K562 (cell line): ENCODE measurements at regions of chr16 and their contacts with region 1.

Region 1: GRCh38 chr16:4475880-4476788 is at the start of gene HMOX2:
- DNase-seq: peak; percentile 91 to 96 (median 93)
- ATAC-seq: peak; percentile 87
- H3K4me3 ChIP-seq: peak within 1 kb of the TSS; percentile 79
- H3K27ac ChIP-seq: peak within 1 kb of the TSS; percentile 95
- H3K4me1 ChIP-seq: peaks cover 11 to 37% of the 10 kb centered on the region in 2 experiments; a peak in 4 of 5 replicates
- H3K27me3 ChIP-seq: no peaks in the 10 kb centered on the region
- CTCF ChIP-seq: peak; percentile 67 to 74 (median 67)
- EP300 ChIP-seq: peak; percentile 26; the same call in 1 of the 2 replicates
- POLR2A ChIP-seq: peak; percentile 87
- RAD21 ChIP-seq: peak in 1 of 2 experiments; percentile 34; a peak in 2 of 4 replicates
- polyA plus RNA-seq, gene HMOX2: 26.8 to 46.3 TPM

Region 2: GRCh38 chr16:4461250-4462085 is 14.7 kb before region 1 on chr16:
- CTCF ChIA-PET with region 1: no interaction called
- POLR2A ChIA-PET with region 1: interaction called, 59 read pairs
- in situ Hi-C with region 1: no loop called
- intact Hi-C with region 1: no loop called
- DNase-seq: peak; percentile 32 to 64 (median 42)
- ATAC-seq: peak; percentile 82
- H3K4me3 ChIP-seq: no peak overlapping the region
- H3K27ac ChIP-seq: no peak overlapping the region
- H3K4me1 ChIP-seq: peaks cover 0 to 18% of the 10 kb centered on the region in 2 experiments; a peak in 2 of 5 replicates
- H3K27me3 ChIP-seq: no peaks in the 10 kb centered on the region
- CTCF ChIP-seq: no peak
- EP300 ChIP-seq: no peak
- POLR2A ChIP-seq: 0 out of 2 replicates have a peak, but pooled peaks have one; percentile 32
- RAD21 ChIP-seq: no peak

Region 3: GRCh38 chr16:4487955-4488498 is 11.9 kb after region 1 on chr16:
- CTCF ChIA-PET with region 1: no interaction called
- POLR2A ChIA-PET with region 1: interaction called, 18 read pairs
- in situ Hi-C with region 1: no loop called
- intact Hi-C with region 1: no loop called
- DNase-seq: no peak
- ATAC-seq: no peak
- H3K4me3 ChIP-seq: no peak overlapping the region
- H3K27ac ChIP-seq: no peak overlapping the region
- H3K4me1 ChIP-seq: peaks cover 0 to 5% of the 10 kb centered on the region in 2 experiments; a peak in 2 of 5 replicates
- H3K27me3 ChIP-seq: no peaks in the 10 kb centered on the region
- CTCF ChIP-seq: no peak
- EP300 ChIP-seq: no peak
- POLR2A ChIP-seq: no peak
- RAD21 ChIP-seq: no peak

Region 4: GRCh38 chr16:4517812-4518680 is 41.9 kb after region 1 on chr16:
- CTCF ChIA-PET with region 1: no interaction called
- POLR2A ChIA-PET with region 1: no interaction called
- in situ Hi-C with region 1: no loop called
- intact Hi-C with region 1: no loop called
- DNase-seq: peak; percentile 46 to 59 (median 54)
- ATAC-seq: peak; percentile 90
- H3K4me3 ChIP-seq: no peak overlapping the region
- H3K27ac ChIP-seq: no peak overlapping the region
- H3K4me1 ChIP-seq: peaks cover 6 to 23% of the 10 kb centered on the region in 2 experiments; a peak in 4 of 5 replicates
- H3K27me3 ChIP-seq: no peaks in the 10 kb centered on the region
- CTCF ChIP-seq: peak; percentile 84 to 88 (median 85)
- EP300 ChIP-seq: no peak
- POLR2A ChIP-seq: no peak
- RAD21 ChIP-seq: peak; percentile 70 to 84